Activated CD8-positive, alpha-beta T cell treated with anti-CD3 and anti-CD28 coated beads, Interleukin-2, amount 10 ng/mL, durations not matched to agents 7 days and 5 days (primary cell): ENCODE measurements at regions of chr17 and their contacts with region 1.

Region 1: GRCh38 chr17:57995076-57995956 is 7.3 kb upstream of the VEZF1 start:
- DNase-seq: peak; percentile 64
- ATAC-seq: peak; percentile 73
- H3K4me3 Mint-ChIP-seq: no peak overlapping the region
- H3K27ac Mint-ChIP-seq: no peak overlapping the region
- H3K4me1 Mint-ChIP-seq: peaks cover 60% of the 10 kb centered on the region
- H3K27me3 Mint-ChIP-seq: no peaks in the 10 kb centered on the region

Region 2: DNA sequence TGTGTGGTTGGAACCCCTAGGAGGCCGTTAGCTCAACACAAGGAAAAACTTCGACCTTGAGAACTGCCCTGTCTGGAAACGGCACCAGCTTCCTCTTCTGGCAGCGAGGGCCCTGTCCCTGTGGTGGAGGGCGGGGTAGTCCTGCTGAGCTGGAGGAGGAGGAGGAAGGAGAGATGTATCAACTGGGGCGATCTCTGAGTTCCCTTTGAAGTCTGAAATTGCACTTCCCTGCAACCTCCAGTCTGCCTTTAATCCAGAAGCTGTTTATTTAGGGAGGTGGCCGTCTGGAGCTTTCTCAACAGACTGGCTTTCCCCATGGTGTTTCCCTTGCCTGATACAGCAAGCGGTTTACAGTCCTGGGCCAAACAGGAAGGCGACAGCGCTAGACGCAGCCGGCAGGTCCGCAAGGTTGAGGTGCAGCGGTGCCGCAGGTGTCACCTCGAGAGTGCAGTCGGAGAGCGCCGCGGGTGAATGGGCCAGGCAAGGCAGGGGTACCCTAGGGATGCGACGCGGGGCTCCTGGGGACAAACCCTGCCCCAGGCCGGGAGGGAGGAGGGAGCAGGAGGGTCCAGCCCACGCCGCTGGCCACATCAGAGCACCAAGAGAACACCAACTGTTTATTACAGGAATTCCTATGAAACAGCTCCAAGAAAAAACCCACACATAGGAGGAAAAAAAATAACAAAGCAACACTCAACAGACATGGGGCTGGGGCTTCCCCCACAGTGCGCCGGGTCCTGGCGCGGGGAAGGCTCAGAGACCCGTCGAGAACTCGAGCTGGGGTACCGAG is 134.1 kb before region 1 on chr17:
- CTCF ChIA-PET with region 1: interaction called, 138 read pairs
- POLR2A ChIA-PET with region 1: interaction called, 6 read pairs
- DNase-seq: peak; percentile 55
- ATAC-seq: peak; percentile 80
- H3K4me3 Mint-ChIP-seq: peak overlapping the region; percentile 56
- H3K27ac Mint-ChIP-seq: peak overlapping the region; percentile 15
- H3K4me1 Mint-ChIP-seq: peaks cover 11% of the 10 kb centered on the region
- H3K27me3 Mint-ChIP-seq: peaks cover 43% of the 10 kb centered on the region

Region 3: DNA sequence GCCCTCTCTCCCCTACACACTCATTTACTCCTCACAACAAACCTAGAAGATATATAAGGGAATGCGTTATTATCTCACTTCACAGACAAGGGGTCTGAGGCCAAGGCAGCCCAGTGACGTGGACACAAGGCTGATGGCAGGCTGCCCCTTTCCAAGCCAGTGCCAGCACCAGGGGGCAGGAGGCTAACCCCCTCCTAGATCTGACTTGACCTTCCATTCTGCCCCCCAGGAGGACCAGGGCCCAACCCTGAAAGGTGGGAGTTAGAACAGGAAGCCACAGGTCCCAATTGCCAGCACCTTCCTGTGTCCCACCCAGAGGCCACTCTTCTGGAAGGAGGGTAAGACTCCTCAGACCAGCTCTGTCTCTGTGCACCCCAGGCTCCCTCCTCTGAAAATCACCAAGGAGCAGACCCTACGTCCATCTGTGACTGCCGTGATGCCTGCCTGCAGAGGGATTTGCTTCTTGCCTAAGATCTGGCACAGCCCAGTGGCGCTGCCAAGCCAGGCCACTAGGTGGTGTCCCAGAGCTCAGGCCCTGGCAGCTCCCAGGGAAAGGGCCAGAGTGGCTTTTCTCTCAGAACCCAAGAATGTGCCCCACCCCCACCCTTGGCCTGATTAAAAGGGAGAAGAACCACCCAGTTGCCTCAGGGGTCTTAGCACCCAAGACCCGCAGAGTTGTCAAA is 103.0 kb before region 1 on chr17:
- CTCF ChIA-PET with region 1: interaction called, 19 read pairs
- POLR2A ChIA-PET with region 1: no interaction called
- DNase-seq: peak; percentile 82
- ATAC-seq: peak; percentile 93
- H3K4me3 Mint-ChIP-seq: no peak overlapping the region
- H3K27ac Mint-ChIP-seq: no peak overlapping the region
- H3K4me1 Mint-ChIP-seq: peaks cover 10% of the 10 kb centered on the region
- H3K27me3 Mint-ChIP-seq: peaks cover 7% of the 10 kb centered on the region

Region 4: GRCh38 chr17:57955183-57955931 is 40.0 kb before region 1 on chr17 and contains the start of gene CUEDC1:
- CTCF ChIA-PET with region 1: interaction called, 20 read pairs
- POLR2A ChIA-PET with region 1: interaction called, 3 read pairs
- DNase-seq: peak; percentile 66
- ATAC-seq: peak; percentile 84
- H3K4me3 Mint-ChIP-seq: peak within 1 kb of the TSS; percentile 40
- H3K27ac Mint-ChIP-seq: no peak within 1 kb of the TSS
- H3K4me1 Mint-ChIP-seq: peaks cover 36% of the 10 kb centered on the region
- H3K27me3 Mint-ChIP-seq: peaks cover 64% of the 10 kb centered on the region
- total RNA-seq, gene CUEDC1: 0.18 TPM in 1 of 2 experiments, not detected in the other

Region 5: DNA sequence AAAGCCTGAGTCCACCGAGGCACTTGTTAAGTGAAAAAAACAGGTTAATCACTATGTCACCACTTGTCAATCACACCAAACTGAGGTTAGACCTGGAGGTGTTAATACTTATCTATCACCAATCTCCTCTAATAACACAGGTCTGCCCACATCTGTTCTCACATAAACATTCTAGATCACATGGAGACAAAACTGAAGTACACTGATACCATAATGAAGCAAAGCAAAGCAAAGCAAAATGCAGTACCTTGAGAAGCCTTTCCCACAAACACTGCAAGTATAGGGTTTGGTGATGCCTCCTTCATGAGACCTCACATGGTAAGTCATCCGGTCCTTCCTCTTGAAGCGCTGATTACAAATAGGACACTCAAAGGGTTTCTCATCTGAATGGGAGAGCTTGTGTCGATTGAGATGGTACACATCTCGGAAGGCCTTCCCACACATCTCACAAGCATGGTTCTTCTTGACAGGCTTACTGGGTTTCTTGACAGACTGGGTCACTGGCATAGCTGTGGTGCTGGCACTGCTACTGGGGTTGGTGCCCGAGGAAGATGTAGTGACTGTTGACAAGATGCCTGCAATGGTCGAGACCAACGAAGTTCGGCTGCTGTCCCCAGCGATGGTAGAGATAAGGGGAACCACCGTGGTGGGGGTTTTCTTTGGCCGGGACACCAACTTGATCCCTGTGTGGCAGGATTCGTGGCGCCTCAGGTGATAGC is 12.7 kb before region 1 on chr17:
- CTCF ChIA-PET with region 1: interaction called, 52 read pairs
- POLR2A ChIA-PET with region 1: interaction called, 3 read pairs
- DNase-seq: no peak
- ATAC-seq: no peak
- H3K4me3 Mint-ChIP-seq: no peak overlapping the region
- H3K27ac Mint-ChIP-seq: no peak overlapping the region
- H3K4me1 Mint-ChIP-seq: peaks cover 51% of the 10 kb centered on the region
- H3K27me3 Mint-ChIP-seq: no peaks in the 10 kb centered on the region

Region 6: GRCh38 chr17:58052945-58053846 is 57.9 kb after region 1 on chr17:
- CTCF ChIA-PET with region 1: no interaction called
- POLR2A ChIA-PET with region 1: no interaction called
- DNase-seq: no peak
- ATAC-seq: no peak
- H3K4me3 Mint-ChIP-seq: no peak overlapping the region
- H3K27ac Mint-ChIP-seq: no peak overlapping the region
- H3K4me1 Mint-ChIP-seq: peaks cover 10% of the 10 kb centered on the region
- H3K27me3 Mint-ChIP-seq: peaks cover 12% of the 10 kb centered on the region

Region 7: GRCh38 chr17:58112970-58113631 is 117.8 kb after region 1 on chr17:
- CTCF ChIA-PET with region 1: interaction called, 42 read pairs
- POLR2A ChIA-PET with region 1: no interaction called
- DNase-seq: peak; percentile 90
- ATAC-seq: peak; percentile 88
- H3K4me3 Mint-ChIP-seq: no peak overlapping the region
- H3K27ac Mint-ChIP-seq: no peak overlapping the region
- H3K4me1 Mint-ChIP-seq: no peaks in the 10 kb centered on the region
- H3K27me3 Mint-ChIP-seq: peaks cover 7% of the 10 kb centered on the region